HCT116 (cell line): ENCODE measurements at regions of chr5 and their contacts with region 1.

Region 1: GRCh38 chr5:177425801-177426565 is 493 bp upstream of the GRK6 start:
- DNase-seq: peak; percentile 100
- ATAC-seq: peak; percentile 90
- H3K4me3 ChIP-seq: peak overlapping the region; percentile 45 to 62
- H3K27ac ChIP-seq: peak overlapping the region; percentile 63
- H3K4me1 ChIP-seq: peaks cover 15 to 28% of the 10 kb centered on the region in 2 experiments
- H3K27me3 ChIP-seq: no peaks in the 10 kb centered on the region
- CTCF ChIP-seq: no peak
- POLR2A ChIP-seq: peak; percentile 42
- RAD21 ChIP-seq: no peak

Region 2: DNA sequence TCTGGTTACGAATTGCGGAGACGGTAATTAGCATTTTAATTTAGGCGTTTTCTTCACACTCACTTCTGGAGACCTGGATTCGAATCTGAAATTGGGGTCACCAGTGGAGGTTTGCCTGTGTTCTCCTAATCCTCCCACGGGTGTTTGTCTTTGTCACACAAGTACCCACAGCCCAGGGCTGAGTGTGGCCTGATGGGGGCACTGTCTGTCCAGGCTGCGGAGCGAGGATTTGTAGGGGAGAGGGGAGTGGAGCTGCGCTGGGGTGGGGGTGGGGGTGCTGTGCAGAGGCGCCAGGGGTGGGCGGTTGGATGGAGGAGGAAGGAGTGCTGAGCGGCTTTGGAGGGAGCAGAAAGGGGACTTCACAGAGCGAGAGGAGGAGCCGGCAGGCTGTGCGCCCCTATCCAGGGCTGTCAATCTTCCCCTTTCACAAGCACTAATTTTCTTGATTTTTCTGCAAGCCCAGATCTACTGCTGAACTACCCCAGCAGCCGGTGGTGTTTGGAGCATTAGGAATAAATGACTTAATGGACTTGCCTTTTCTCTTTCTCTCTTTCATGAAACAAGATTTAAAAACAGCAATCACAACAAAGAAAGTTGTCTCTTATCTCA is 725.6 kb before region 1 on chr5:
- CTCF ChIA-PET with region 1: no interaction called
- POLR2A ChIA-PET with region 1: no interaction called
- RAD21 ChIA-PET with region 1: no interaction called
- intact Hi-C with region 1: no loop called
- DNase-seq: no peak
- ATAC-seq: peak; percentile 88
- H3K4me3 ChIP-seq: no peak overlapping the region
- H3K27ac ChIP-seq: no peak overlapping the region
- H3K4me1 ChIP-seq: no peaks in the 10 kb centered on the region
- H3K27me3 ChIP-seq: no peaks in the 10 kb centered on the region
- CTCF ChIP-seq: peak; percentile 52 to 69 (median 65); a peak in 5 of 6 replicates
- POLR2A ChIP-seq: no peak
- RAD21 ChIP-seq: peak; percentile 83

Region 3: GRCh38 chr5:177403792-177404640 is 22.0 kb before region 1 on chr5:
- CTCF ChIA-PET with region 1: interaction called, 20 read pairs
- POLR2A ChIA-PET with region 1: interaction called, 15 read pairs
- RAD21 ChIA-PET with region 1: interaction called in 1 of 2 experiments, 3 read pairs
- intact Hi-C with region 1: no loop called
- DNase-seq: peak; percentile 56
- ATAC-seq: peak; percentile 72
- H3K4me3 ChIP-seq: peak overlapping the region; percentile 69 to 82
- H3K27ac ChIP-seq: peak overlapping the region; percentile 99
- H3K4me1 ChIP-seq: peaks cover 15 to 37% of the 10 kb centered on the region in 2 experiments
- H3K27me3 ChIP-seq: no peaks in the 10 kb centered on the region
- CTCF ChIP-seq: peak in 2 of 3 experiments; percentile 55 to 69; a peak in 4 of 6 replicates
- POLR2A ChIP-seq: no peak
- RAD21 ChIP-seq: no peak

Region 4: GRCh38 chr5:177473461-177474001 is 47.5 kb after region 1 on chr5 and contains the start of gene DBN1:
- CTCF ChIA-PET with region 1: no interaction called
- POLR2A ChIA-PET with region 1: no interaction called
- RAD21 ChIA-PET with region 1: no interaction called
- intact Hi-C with region 1: no loop called
- DNase-seq: no peak
- ATAC-seq: peak; percentile 78
- H3K4me3 ChIP-seq: peak within 1 kb of the TSS; percentile 85 to 92
- H3K27ac ChIP-seq: peak within 1 kb of the TSS; percentile 84
- H3K4me1 ChIP-seq: peaks cover 8 to 55% of the 10 kb centered on the region in 2 experiments; a peak in 3 of 4 replicates
- H3K27me3 ChIP-seq: no peaks in the 10 kb centered on the region
- CTCF ChIP-seq: no peak
- POLR2A ChIP-seq: no peak
- RAD21 ChIP-seq: no peak
- total RNA-seq, gene DBN1: 144 TPM

Region 5: GRCh38 chr5:178153573-178154343 is 727.8 kb after region 1 on chr5 and contains the start of gene NHP2:
- CTCF ChIA-PET with region 1: no interaction called
- POLR2A ChIA-PET with region 1: no interaction called
- RAD21 ChIA-PET with region 1: no interaction called
- intact Hi-C with region 1: no loop called
- DNase-seq: peak; percentile 98
- ATAC-seq: peak; percentile 95
- H3K4me3 ChIP-seq: peak within 1 kb of the TSS; percentile 78 to 86
- H3K27ac ChIP-seq: peak within 1 kb of the TSS; percentile 51
- H3K4me1 ChIP-seq: peaks cover 14 to 21% of the 10 kb centered on the region in 2 experiments; a peak in 3 of 4 replicates
- H3K27me3 ChIP-seq: no peaks in the 10 kb centered on the region
- CTCF ChIP-seq: no peak
- POLR2A ChIP-seq: peak; percentile 26
- RAD21 ChIP-seq: no peak
- total RNA-seq, gene NHP2: 260 TPM